ENCODE measurements at regions of chr1 and their contacts with region 1.

Region 1: DNA sequence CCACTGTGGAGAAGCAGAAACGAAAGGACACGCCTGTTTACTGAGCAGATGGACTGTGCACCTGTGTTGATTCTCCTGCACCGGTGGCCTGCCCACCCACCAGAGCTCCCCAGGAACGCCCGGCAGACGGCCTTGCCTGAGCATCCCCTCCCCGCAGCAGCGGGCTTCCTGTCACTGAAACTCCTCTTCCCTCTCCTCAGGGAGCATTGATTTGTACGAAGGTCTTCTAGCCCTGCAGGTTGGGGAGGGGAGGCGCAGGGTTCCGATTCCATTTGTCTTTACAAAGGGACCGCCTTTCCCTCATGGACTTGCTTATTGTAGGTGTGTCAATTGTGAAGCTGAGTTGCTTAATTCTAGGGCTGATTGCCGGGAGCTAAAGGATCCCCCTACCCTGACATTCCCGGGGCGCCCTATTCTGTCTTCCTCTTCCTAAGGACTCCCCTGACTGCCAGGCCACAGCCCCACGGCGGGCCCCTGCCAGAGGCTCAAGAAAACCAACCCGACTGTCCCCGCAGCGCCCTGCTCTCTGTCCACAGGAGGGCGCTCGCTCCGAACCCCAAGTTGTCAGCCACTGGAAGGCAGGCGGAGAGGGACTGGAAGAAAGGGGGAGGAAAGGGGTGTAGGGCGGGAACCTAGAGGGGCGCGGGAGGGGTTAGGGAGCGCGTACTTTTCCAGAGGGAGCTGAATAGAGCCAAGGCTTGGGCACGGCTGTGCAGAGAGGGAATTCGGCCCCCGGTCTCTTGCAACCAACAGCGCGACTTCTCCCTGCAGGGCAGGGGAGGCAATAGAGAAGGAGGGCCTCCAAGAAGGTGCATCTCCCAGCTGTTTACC is 2.8 kb downstream of the S100A6 start:
- DNase-seq: peak; percentile 92 to 95
- H3K4me3 ChIP-seq: peak overlapping the region; percentile 72 to 94
- H3K27ac ChIP-seq: peak overlapping the region; percentile 93 to 99
- H3K4me1 ChIP-seq: peaks cover 0 to 54% (median 34%) of the 10 kb centered on the region in 4 donors
- H3K27me3 ChIP-seq: no peaks in the 10 kb centered on the region
- CTCF ChIP-seq: peak; percentile 88 to 96

Region 2: GRCh38 chr1:153566440-153567379 is 33.7 kb after region 1 on chr1:
- intact Hi-C with region 1: loop called (anchors 1 kb)
- DNase-seq: peak; percentile 98 to 99
- H3K4me3 ChIP-seq: peak overlapping the region in 1 of 2 donors; percentile 15
- H3K27ac ChIP-seq: peak overlapping the region; percentile 94 to 95
- H3K4me1 ChIP-seq: peaks cover 15 to 43% (median 39%) of the 10 kb centered on the region in 4 donors
- H3K27me3 ChIP-seq: no peaks in the 10 kb centered on the region
- CTCF ChIP-seq: peak in 1 of 2 experiments; percentile 28